Pancreas (tissue), 10 donors: ENCODE measurements at regions of chr1 and their contacts with region 1.

Region 1: GRCh38 chr1:115609021-115609420 is 32.7 kb upstream of the VANGL1 start:
- DNase-seq: no peak
- ATAC-seq: no peak
- H3K4me3 ChIP-seq: no peak overlapping the region
- H3K27ac ChIP-seq: no peak overlapping the region
- H3K4me1 ChIP-seq: no peaks in the 10 kb centered on the region
- H3K27me3 ChIP-seq: no peaks in the 10 kb centered on the region
- CTCF ChIP-seq: no peak

Region 2: GRCh38 chr1:115706587-115707425 is 97.8 kb after region 1 on chr1:
- intact Hi-C with region 1: loop called in 2 of 3 experiments (anchors 10 kb)
- DNase-seq: no peak
- ATAC-seq: peak; percentile 28 to 74 (median 59)
- H3K4me3 ChIP-seq: no peak overlapping the region
- H3K27ac ChIP-seq: no peak overlapping the region
- H3K4me1 ChIP-seq: no peaks in the 10 kb centered on the region
- H3K27me3 ChIP-seq: no peaks in the 10 kb centered on the region
- CTCF ChIP-seq: peak; percentile 54 to 77 (median 60)